ENCODE measurements at regions of chr18 and their contacts with region 1.

Region 1: GRCh38 chr18:45839414-45840395 is 14.2 kb downstream of the SIGLEC15 start:
- DNase-seq: peak; percentile 70
- H3K4me3 ChIP-seq: no peak overlapping the region
- H3K27ac ChIP-seq: no peak overlapping the region
- H3K4me1 ChIP-seq: peaks cover 4% of the 10 kb centered on the region
- H3K27me3 ChIP-seq: peaks cover 24 to 38% of the 10 kb centered on the region in 2 experiments
- CTCF ChIP-seq: peak; percentile 63 to 79
- POLR2A ChIP-seq: no peak

Region 2: GRCh38 chr18:45664824-45665763 is 174.6 kb before region 1 on chr18:
- CTCF ChIA-PET with region 1: interaction called, 16 read pairs
- POLR2A ChIA-PET with region 1: no interaction called
- dilution Hi-C with region 1: no loop called
- intact Hi-C with region 1: loop called (anchors 1 kb)
- DNase-seq: peak; percentile 65
- H3K4me3 ChIP-seq: no peak overlapping the region
- H3K27ac ChIP-seq: no peak overlapping the region
- H3K4me1 ChIP-seq: peaks cover 5% of the 10 kb centered on the region
- H3K27me3 ChIP-seq: no peaks in the 10 kb centered on the region
- CTCF ChIP-seq: peak; percentile 75 to 78
- POLR2A ChIP-seq: no peak

Region 3: DNA sequence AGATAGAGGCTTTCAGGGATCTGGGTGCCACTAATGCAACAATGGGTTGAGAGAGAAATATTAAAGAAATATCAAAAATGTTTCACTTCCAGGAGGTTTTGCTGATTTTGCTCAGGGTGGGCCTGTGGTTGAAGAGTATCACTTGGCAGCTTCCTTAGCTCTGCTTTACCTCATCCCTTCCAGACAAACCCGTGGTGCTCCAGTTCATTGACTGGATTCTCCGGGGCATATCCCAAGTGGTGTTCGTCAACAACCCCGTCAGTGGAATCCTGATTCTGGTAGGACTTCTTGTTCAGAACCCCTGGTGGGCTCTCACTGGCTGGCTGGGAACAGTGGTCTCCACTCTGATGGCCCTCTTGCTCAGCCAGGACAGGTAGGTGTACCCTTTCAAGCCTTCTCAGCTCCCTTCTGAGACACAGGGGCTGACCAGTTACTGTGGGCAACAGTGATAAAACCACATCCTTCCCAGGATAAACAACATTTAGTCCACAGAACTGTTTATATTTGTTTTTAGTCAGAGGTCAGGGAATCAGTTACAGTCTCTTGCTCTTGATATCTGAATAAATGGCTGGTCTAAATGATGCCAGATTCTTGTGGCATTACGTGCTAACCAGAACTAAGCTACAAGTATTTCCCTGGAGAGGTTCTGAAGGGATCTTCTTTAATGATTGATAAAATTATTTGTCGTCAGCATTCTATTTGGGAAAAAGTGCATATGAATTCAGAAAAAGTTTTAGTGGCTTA is 108.7 kb before region 1 on chr18:
- CTCF ChIA-PET with region 1: interaction called, 307 read pairs
- POLR2A ChIA-PET with region 1: no interaction called
- dilution Hi-C with region 1: no loop called
- intact Hi-C with region 1: no loop called
- DNase-seq: no peak
- H3K4me3 ChIP-seq: no peak overlapping the region
- H3K27ac ChIP-seq: no peak overlapping the region
- H3K4me1 ChIP-seq: no peaks in the 10 kb centered on the region
- H3K27me3 ChIP-seq: peaks cover 11 to 38% of the 10 kb centered on the region in 2 experiments
- CTCF ChIP-seq: no peak
- POLR2A ChIP-seq: no peak

Region 4: GRCh38 chr18:45755934-45756333 is 83.8 kb before region 1 on chr18:
- CTCF ChIA-PET with region 1: interaction called, 9 read pairs
- POLR2A ChIA-PET with region 1: no interaction called
- dilution Hi-C with region 1: no loop called
- intact Hi-C with region 1: loop called (anchors 2 kb)
- DNase-seq: peak; percentile 99
- H3K4me3 ChIP-seq: no peak overlapping the region
- H3K27ac ChIP-seq: no peak overlapping the region
- H3K4me1 ChIP-seq: peaks cover 26% of the 10 kb centered on the region
- H3K27me3 ChIP-seq: peaks cover 15 to 32% of the 10 kb centered on the region in 2 experiments
- CTCF ChIP-seq: no peak
- POLR2A ChIP-seq: no peak

Region 5: DNA sequence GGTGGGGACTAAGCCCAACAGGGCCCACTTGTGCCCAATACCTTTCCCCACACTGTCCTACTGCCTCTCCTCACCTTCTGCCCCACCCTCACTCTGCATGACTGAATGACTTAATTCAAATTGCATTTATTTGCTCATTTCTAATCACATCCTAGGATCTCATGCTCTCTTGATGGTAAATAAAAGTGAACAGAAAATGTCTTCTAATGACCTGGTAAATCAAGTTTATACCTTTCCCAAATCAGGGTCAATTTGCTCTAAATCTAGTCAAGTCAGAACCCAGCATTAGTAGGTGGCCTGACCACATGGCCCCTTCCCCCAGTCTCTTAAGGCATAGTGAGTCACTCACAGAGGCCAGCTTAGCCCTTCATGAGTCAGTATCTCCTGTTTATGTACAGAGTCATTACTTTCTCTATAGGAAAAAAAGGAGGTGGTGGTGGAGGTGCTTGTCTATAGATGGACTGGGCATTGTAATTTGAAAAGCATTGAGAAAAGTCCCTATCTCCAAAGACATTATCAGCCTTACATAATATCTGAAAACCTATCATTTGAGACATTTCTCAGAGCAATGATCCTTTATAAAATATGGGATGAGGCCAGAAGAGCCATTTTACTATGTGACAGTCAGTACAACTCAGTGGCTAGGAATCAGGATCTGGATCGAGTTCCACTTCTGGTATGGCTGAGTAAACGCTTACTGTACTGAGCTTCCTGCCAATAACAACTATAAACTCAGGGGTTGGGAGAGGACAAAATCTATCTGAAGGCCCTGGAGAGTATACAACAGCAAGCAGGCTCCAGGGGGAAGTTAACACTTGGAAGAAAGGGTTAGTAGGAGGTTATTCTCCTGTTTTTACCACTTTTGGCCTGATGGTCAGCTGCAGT is 36.9 kb before region 1 on chr18:
- CTCF ChIA-PET with region 1: interaction called, 15 read pairs
- POLR2A ChIA-PET with region 1: no interaction called
- dilution Hi-C with region 1: no loop called
- intact Hi-C with region 1: loop called (anchors 2 kb)
- DNase-seq: peak; percentile 94
- H3K4me3 ChIP-seq: no peak overlapping the region
- H3K27ac ChIP-seq: peak overlapping the region; percentile 88
- H3K4me1 ChIP-seq: peaks cover 26% of the 10 kb centered on the region
- H3K27me3 ChIP-seq: no peaks in the 10 kb centered on the region
- CTCF ChIP-seq: no peak
- POLR2A ChIP-seq: no peak

Region 6: DNA sequence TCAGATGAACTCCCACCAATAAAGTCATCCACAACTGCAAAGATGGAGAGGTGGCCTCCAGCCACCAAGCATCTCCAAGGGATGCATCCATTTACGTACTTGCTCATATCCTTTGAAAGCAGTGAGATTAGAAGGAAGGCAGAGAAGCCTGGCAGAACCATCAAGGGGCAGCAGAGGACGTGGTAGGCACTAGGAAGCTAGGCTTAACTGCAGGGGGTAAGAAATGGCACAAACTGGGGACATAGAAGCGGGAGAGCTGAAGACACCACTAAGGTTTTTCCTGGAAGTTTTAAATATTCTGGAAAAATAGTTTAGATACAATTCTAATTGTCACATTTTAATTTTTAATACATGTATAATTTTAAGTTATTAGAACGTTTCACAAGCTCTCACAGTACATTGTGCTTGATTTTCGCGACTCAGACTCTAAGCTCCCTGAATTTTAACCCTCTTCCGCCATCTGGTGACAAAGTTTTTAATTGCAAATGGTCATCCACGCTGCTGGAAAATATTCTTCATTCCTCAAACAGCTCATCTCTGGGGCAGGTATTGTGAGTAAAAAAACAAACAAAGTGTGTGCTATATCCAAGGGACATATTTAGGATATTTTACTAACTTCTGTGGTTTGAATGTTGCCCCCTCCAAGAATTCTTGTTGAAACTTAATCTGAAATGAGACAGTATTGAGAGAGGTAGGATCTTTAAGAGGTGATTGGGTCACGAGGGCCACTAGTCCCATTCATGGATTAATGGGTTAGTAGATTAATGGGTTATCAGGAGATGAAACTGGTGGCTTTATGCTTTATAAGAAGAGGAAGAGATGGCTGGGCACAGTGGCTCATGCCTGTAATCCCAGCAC is 234.0 kb after region 1 on chr18:
- CTCF ChIA-PET with region 1: interaction called, 10 read pairs
- POLR2A ChIA-PET with region 1: no interaction called
- dilution Hi-C with region 1: no loop called
- intact Hi-C with region 1: loop called (anchors 1 kb)
- DNase-seq: peak; percentile 75
- H3K4me3 ChIP-seq: no peak overlapping the region
- H3K27ac ChIP-seq: no peak overlapping the region
- H3K4me1 ChIP-seq: peaks cover 9% of the 10 kb centered on the region
- H3K27me3 ChIP-seq: no peaks in the 10 kb centered on the region
- CTCF ChIP-seq: peak; percentile 37 to 48
- POLR2A ChIP-seq: no peak